Mammary epithelial cell (primary cell): ENCODE measurements at regions of chr16 and their contacts with region 1.

Region 1: DNA sequence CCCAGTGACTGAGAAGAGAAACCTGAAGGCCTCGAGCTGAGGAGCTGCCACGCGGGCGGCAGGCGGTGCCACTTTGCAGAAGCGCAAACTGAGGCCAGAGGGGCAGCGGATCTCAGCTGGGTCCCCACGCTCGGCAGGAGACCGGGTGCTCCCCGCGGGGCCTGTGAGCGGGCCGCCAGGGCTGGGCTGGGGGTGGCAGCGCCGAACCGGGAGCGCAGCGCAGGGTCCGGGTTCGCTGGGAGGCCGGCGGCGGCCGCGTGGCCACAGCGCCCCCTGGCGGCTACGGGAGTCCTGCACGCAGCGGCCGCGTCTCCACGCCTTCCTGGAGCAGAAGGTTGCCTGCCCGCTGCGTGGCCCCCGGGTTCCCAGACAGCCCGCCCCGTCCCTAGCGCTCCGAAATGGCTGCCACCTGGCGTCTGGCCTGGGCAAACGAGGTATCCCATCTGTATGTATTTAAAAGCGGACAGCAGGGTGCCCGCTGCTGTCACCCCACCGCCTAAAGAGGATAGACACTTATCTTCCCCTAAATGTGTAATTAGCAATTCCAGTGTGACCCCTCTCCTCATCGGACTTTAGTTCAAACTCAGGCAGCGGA is 96.1 kb upstream of the CDH5 start:
- DNase-seq: peak; percentile 25
- H3K4me3 ChIP-seq: peak overlapping the region in 2 of 3 experiments; percentile 18 to 35
- H3K27ac ChIP-seq: no peak overlapping the region
- H3K4me1 ChIP-seq: peaks cover 37% of the 10 kb centered on the region
- H3K27me3 ChIP-seq: no peaks in the 10 kb centered on the region
- CTCF ChIP-seq: peak; percentile 63 to 78

Region 2: DNA sequence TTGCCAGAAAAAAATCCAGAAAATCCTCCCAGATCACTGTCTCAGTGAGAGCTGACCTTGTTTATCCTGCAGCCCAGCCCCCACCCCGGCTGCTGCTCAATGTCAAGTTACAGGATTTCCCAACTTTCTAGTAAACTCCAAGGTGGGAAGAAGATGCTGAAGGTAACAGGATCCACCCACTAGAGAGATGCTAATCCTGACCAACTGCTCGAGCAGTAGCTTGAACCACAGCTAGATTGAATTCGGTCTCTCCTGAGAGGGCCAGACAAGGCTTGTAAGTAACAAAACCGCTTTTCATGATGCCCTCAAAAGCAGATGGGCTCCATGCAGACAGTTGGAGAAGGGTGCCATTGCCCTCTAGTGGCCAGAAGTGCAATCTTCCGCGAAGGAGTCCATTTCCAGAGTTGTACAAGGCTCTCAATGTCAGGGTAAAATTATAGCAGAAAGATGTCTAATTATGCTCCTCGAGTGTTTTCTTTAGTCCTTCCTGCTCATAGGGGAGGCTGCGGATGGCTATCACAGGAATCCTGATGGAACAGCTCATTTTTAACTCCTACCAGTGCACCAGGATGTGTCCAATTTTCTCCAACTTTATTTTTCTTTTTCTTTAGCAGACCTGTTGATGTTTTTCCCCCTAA is 1152.5 kb before region 1 on chr16:
- CTCF ChIA-PET with region 1: no interaction called
- dilution Hi-C with region 1: no loop called
- in situ Hi-C with region 1: loop called in 1 of 2 experiments (anchors 10 kb)
- intact Hi-C with region 1: loop called (anchors 2 kb)
- DNase-seq: peak; percentile 46
- H3K4me3 ChIP-seq: no peak overlapping the region
- H3K27ac ChIP-seq: no peak overlapping the region
- H3K4me1 ChIP-seq: peaks cover 25% of the 10 kb centered on the region
- H3K27me3 ChIP-seq: no peaks in the 10 kb centered on the region
- CTCF ChIP-seq: peak; percentile 95 to 98

Region 3: DNA sequence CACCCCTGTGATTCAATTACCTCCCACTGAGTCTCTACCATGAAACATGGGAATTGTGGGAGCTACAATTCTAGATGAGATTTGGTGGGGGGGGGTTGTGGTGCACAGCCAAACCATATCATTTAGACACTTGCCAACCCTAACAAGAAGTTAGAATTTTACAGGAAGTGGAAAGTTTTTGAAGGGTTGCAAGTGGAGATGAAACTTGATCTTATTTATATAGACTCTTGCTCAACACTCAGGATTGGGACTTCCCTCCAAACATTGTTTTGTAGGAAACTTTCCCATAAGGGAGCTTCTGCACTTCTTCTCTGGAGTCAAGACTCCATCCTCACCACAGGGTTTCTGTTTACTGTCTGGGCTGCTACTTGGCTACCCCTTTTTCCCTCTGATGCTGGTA is 881.8 kb before region 1 on chr16:
- CTCF ChIA-PET with region 1: no interaction called
- dilution Hi-C with region 1: loop called (anchors 25 kb)
- in situ Hi-C with region 1: no loop called
- intact Hi-C with region 1: no loop called
- DNase-seq: peak; percentile 10
- H3K4me3 ChIP-seq: no peak overlapping the region
- H3K27ac ChIP-seq: no peak overlapping the region
- H3K4me1 ChIP-seq: peaks cover 10% of the 10 kb centered on the region
- H3K27me3 ChIP-seq: no peaks in the 10 kb centered on the region
- CTCF ChIP-seq: no peak

Region 4: GRCh38 chr16:65658349-65658748 is 612.1 kb before region 1 on chr16:
- CTCF ChIA-PET with region 1: no interaction called
- dilution Hi-C with region 1: no loop called
- in situ Hi-C with region 1: no loop called
- intact Hi-C with region 1: loop called (anchors 5 kb)
- DNase-seq: peak; percentile 95
- H3K4me3 ChIP-seq: no peak overlapping the region
- H3K27ac ChIP-seq: peak overlapping the region; percentile 69
- H3K4me1 ChIP-seq: peaks cover 38% of the 10 kb centered on the region
- H3K27me3 ChIP-seq: no peaks in the 10 kb centered on the region
- CTCF ChIP-seq: no peak

Region 5: DNA sequence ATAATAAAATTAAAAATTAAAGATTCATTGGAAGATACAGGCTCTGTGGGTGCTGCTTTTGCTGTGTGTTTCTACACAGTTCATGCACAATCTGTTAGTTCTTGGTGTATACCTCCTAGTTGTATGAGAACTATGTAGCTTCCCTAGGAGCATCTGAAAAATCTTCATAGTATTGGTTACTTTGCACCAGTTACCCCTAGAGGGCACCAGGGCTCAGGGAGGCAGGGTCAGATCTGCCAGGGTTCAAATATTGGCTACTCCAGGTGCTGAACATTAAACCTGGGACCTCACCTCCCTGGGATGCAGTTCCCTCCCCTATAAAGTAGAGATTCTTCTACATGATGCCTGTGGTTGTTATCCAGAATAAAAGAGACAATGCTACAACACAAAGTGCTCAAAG is 565.6 kb before region 1 on chr16:
- CTCF ChIA-PET with region 1: no interaction called
- dilution Hi-C with region 1: no loop called
- in situ Hi-C with region 1: no loop called
- intact Hi-C with region 1: loop called (anchors 1 kb)
- DNase-seq: no peak
- H3K4me3 ChIP-seq: no peak overlapping the region
- H3K27ac ChIP-seq: no peak overlapping the region
- H3K4me1 ChIP-seq: no peaks in the 10 kb centered on the region
- H3K27me3 ChIP-seq: no peaks in the 10 kb centered on the region
- CTCF ChIP-seq: peak; percentile 25 to 74

Region 6: DNA sequence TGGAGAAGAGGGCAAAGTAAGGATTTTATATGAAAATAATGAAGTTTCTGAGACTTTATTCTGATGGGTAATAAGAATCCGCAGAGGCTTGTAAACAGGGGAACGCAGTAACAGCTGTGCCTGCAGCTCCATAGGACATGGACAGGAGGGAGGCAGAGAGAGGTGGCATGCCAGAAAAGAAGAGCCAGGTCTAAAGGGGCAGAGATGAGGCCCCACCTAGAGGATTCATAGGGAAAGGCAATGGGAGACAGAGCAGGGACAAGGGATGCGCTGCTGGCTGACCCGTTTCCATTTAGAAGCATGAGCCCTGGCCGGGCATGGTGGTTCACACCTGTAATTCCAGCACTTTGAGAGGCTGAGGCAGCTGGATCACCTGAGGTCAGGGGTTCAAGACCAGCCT is 244.2 kb before region 1 on chr16:
- CTCF ChIA-PET with region 1: interaction called, 4 read pairs
- dilution Hi-C with region 1: no loop called
- in situ Hi-C with region 1: no loop called
- intact Hi-C with region 1: loop called (anchors 2 kb)
- DNase-seq: no peak
- H3K4me3 ChIP-seq: no peak overlapping the region
- H3K27ac ChIP-seq: no peak overlapping the region
- H3K4me1 ChIP-seq: peaks cover 11% of the 10 kb centered on the region
- H3K27me3 ChIP-seq: no peaks in the 10 kb centered on the region
- CTCF ChIP-seq: peak; percentile 38 to 62

Region 7: DNA sequence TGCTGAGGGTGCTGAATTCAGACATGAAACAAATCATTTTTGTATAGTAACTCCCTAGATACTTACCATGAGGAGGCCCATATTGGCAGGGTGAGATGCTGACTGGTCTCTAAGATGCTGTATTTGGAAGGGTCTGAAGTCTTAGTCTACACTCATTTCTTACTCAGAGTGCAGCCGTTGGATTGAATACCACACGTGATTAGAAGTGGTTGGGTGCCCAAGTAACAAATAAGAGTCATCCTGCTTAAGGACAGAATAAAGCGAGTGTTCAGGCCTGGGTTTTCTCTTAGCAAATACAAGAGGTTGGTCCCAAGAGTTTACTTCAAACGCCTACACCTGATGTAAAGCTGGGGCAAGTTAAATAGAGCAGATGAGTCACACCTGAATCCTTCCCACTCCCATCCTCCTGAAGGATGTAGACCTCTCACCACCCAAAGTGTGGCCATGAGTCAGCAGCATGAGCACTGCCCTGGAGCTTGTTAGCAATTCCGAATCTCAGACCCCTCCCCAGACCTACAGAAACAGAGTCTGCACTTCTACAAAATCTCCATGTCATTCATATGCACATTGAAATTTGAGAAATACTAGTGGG is 188.6 kb before region 1 on chr16:
- CTCF ChIA-PET with region 1: no interaction called
- dilution Hi-C with region 1: no loop called
- in situ Hi-C with region 1: no loop called
- intact Hi-C with region 1: loop called (anchors 5 kb)
- DNase-seq: peak; percentile 91
- H3K4me3 ChIP-seq: no peak overlapping the region
- H3K27ac ChIP-seq: peak overlapping the region; percentile 53
- H3K4me1 ChIP-seq: peaks cover 13% of the 10 kb centered on the region
- H3K27me3 ChIP-seq: no peaks in the 10 kb centered on the region
- CTCF ChIP-seq: no peak

Region 8: GRCh38 chr16:66228792-66229191 is 41.6 kb before region 1 on chr16:
- CTCF ChIA-PET with region 1: no interaction called
- dilution Hi-C with region 1: no loop called
- in situ Hi-C with region 1: no loop called
- intact Hi-C with region 1: no loop called
- DNase-seq: no peak
- H3K4me3 ChIP-seq: no peak overlapping the region
- H3K27ac ChIP-seq: no peak overlapping the region
- H3K4me1 ChIP-seq: peaks cover 8% of the 10 kb centered on the region
- H3K27me3 ChIP-seq: no peaks in the 10 kb centered on the region
- CTCF ChIP-seq: no peak